ENCODE measurements at regions of chr7 and their contacts with region 1.

Region 1: DNA sequence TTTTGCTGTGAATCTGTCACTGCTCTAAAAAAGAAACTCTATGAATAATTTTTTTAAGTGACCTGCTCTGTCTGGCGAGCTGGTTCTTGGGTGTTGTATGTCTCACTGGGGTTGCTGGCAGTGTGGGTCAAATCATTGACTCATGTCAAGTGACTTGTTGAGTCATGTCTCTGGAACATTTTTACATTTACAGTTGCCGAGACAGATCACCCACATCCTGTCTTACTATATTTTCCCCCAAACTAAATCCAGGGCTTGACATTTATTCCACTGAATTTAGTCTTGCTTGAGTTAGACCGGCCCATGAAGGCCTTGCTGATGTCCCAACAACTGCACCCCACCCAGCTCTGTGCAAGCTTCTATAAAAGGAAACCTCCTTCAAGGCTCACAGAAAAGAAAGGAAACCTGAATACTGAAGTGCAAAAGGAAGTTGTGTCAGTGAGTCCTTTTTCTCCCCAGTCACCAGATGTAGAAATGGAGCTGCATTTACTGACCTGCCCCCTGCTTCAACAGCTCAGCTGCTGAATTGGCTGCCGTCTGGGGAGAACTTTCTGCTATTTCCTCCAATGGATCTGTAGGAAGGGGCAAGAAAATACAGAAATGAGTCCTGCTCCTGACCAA is 290.3 kb downstream of the TNS3 start:
- DNase-seq: no peak
- ATAC-seq: peak in 3 of 4 donors; percentile 11 to 63 (median 45)
- H3K4me3 ChIP-seq: no peak overlapping the region
- H3K27ac ChIP-seq: peak overlapping the region in 8 of 12 donors; percentile 3 to 61 (median 24)
- H3K4me1 ChIP-seq: peaks cover 5 to 59% (median 31%) of the 10 kb centered on the region in 12 donors
- H3K27me3 ChIP-seq: no peaks in the 10 kb centered on the region
- CTCF ChIP-seq: no peak
- POLR2A ChIP-seq: no peak

Region 2: GRCh38 chr7:47371729-47372368 is 80.3 kb after region 1 on chr7:
- intact Hi-C with region 1: loop called in 2 of 10 experiments (anchors 5 to 10 kb)
- DNase-seq: peak; percentile 83 to 91 (median 85)
- ATAC-seq: peak; percentile 80 to 89 (median 88)
- H3K4me3 ChIP-seq: no peak overlapping the region
- H3K27ac ChIP-seq: peak overlapping the region in 6 of 12 donors; percentile 21 to 51 (median 33)
- H3K4me1 ChIP-seq: peaks cover 0 to 62% (median 35%) of the 10 kb centered on the region in 12 donors
- H3K27me3 ChIP-seq: no peaks in the 10 kb centered on the region
- CTCF ChIP-seq: no peak
- POLR2A ChIP-seq: no peak

Region 3: DNA sequence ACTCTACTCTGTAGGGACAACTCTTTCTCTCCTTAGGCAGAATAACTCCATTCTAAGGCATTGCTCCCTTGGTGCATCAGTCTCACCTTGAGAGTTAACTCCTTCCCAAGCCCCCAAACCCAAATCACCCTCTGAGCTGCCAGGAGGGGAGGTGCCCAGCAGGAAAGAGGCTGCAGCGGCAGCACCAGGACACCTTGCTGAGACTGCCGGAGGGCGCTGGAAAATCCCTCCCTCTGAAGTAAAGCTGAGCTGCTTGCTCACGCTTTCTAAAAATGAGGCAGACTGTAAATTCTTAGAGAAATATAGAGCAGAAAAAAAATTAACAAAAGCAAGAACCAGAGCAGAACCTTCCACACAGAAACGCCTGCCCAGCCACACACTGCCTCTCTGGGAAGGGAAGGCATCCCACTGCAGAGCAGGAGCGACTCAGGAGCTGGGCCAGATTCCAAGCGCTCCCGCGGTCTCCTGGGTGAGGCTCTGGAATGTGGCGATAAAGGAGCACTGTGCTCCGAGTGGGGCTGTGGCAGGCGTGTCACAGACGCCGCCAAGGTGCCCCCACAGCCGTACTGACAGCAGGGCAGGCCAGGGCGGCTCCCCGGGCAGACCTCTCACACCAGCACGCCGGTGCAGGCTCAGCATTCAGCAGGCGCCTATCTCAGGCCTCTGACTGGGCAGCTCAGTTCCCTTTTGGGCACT is 88.2 kb after region 1 on chr7:
- intact Hi-C with region 1: loop called in 2 of 10 experiments (anchors 5 to 10 kb)
- DNase-seq: peak; percentile 77 to 93 (median 85)
- ATAC-seq: peak; percentile 90 to 94 (median 92)
- H3K4me3 ChIP-seq: peak overlapping the region in 5 of 12 donors; percentile 9 to 32 (median 24)
- H3K27ac ChIP-seq: peak overlapping the region; percentile 29 to 90 (median 74)
- H3K4me1 ChIP-seq: peaks cover 0 to 49% (median 29%) of the 10 kb centered on the region in 12 donors
- H3K27me3 ChIP-seq: no peaks in the 10 kb centered on the region
- CTCF ChIP-seq: peak in 1 of 12 donors; percentile 14
- POLR2A ChIP-seq: no peak